ENCODE measurements at regions of chr7 and their contacts with region 1.

Region 1: DNA sequence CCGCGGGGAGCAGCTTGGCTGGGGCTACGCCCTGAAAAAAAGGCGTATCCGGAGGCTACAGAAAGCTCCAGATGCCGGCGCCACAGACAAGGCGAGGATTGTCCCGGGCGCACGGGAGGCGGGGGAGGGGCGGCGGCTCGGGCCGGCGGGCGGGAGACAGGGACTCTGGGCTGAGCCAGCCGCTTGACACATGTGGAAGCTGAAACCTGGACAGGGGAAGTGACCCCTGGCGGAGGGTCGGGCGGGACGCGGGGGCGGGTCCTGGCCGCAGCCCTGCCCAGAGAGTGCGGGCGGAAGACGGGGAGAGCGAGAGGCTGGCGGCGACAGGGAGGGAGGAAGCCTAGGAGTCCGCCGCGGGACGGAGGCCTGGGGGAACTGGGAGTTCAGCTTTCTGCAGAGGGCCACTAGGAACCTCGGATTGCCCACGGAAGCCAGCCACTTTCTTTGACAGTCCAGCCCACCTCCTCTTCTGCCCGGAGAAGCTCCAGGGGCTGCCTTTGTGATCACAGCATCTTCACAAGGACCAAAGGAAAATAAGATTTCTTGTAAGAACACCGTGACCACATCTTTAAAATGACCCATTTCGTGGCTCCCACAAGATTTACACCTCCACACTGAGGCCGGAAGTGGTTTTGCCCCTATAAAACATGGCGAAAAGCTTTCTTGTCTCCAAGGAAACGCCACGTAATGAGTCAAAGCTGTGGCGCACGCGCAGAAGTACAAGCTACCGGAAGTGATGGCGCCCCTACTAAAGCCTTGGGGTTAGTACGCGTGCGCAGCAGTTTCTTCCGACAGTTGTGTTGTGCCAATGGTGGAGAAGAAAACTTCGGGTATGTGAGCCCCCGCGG is at the starts of genes PLOD3 and ZNHIT1:
- DNase-seq: peak; percentile 100

Region 2: GRCh38 chr7:101009629-101010028 is 208.0 kb before region 1 on chr7:
- in situ Hi-C with region 1: no loop called
- DNase-seq: no peak

Region 3: DNA sequence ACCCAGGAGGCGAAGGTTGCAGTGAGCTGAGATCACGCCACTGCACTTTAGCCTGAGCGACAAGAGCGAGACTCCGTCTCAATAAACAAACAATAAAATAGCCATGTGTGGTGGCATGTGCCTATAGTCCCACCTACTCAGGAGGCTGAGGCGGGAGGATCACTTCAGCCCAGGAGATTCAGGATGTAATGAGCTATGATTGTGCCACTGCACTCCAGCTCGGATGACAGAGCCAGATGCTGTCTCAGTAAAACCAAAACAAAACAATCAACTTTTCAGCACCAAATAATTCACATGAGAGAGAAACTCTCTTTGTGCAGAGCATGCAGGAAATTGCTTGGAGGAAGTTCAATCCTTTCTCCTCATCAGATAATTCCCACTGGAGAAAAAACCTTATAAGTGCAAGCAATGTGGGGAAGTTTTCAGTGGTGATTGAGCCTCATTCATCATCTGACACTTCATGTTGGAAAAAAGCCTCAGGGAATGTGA is 40.7 kb after region 1 on chr7:
- in situ Hi-C with region 1: loop called (anchors 5 kb)
- DNase-seq: no peak

Region 4: GRCh38 chr7:101538596-101539459 is 321.2 kb after region 1 on chr7:
- in situ Hi-C with region 1: no loop called
- DNase-seq: peak; percentile 70